ENCODE measurements at regions of chr2 and their contacts with region 1.

Region 1: DNA sequence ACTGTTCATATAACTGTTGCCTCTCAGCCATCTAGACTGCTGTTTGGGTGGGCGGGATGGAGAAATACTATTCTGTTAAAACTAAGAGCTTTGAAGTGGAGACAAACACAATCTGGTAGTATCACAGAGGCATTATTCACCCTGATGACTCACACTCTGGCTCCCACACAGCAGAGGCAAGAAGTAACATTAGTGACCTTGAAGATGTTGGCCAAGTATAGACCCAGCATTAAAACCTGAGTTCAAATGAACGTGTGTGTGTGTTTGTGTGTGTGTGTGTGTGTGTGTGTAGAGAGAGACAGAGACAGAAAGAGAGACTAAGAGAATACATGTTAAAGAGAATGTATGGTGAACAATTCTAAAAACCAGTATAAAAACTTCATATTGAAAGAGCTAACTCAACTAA is 22.5 kb upstream of the ACVR1 start:
- DNase-seq: peak; percentile 46 to 88 (median 63)
- ATAC-seq: peak; percentile 90
- H3K4me3 ChIP-seq: no peak overlapping the region
- H3K27ac ChIP-seq: peak overlapping the region; percentile 40; the same call in 2 of the 3 replicates
- H3K4me1 ChIP-seq: peaks cover 23 to 40% of the 10 kb centered on the region in 2 experiments
- H3K27me3 ChIP-seq: no peaks in the 10 kb centered on the region
- CTCF ChIP-seq: no peak
- EP300 ChIP-seq: peak; percentile 69; the same call in 1 of the 2 replicates
- POLR2A ChIP-seq: no peak
- RAD21 ChIP-seq: peak in 1 of 2 experiments; percentile 11; a peak in 1 of 4 replicates

Region 2: DNA sequence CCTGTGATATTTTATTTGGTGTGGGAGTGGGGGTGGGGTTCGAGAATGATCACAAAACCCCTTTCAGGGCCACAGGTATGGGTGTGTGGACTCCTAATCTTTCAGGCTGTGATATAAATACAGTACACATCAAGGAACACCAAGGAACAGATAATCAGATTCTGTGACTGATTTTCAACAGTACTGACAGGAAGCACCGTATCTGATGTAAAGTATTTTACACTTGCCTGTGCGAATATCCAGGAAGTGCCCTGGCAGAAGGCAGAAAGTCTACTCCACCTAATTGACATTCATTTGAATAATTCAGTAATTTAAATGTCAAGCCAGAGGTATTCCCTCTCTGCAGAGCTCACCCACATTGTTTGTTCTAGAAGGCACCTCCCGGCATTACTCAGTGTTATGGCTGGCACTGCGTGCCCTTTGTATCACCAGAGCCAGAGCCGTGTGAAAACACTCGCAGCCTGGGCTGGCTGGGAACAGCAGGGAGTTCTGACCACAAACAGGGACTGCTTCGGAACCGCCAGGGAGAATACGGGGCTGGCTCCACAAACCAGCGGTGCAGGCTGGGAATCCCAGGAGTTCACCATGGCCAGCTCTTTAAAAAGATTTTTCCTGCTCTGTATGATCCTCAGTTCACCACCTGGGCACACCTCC is 114.3 kb before region 1 on chr2:
- CTCF ChIA-PET with region 1: no interaction called
- POLR2A ChIA-PET with region 1: interaction called, 3 read pairs
- in situ Hi-C with region 1: no loop called
- intact Hi-C with region 1: loop called (anchors 1 kb)
- DNase-seq: peak in 2 of 4 experiments; percentile 24 to 29
- ATAC-seq: no peak
- H3K4me3 ChIP-seq: no peak overlapping the region
- H3K27ac ChIP-seq: peak overlapping the region; percentile 37; the same call in 2 of the 3 replicates
- H3K4me1 ChIP-seq: peaks cover 22 to 66% of the 10 kb centered on the region in 2 experiments
- H3K27me3 ChIP-seq: no peaks in the 10 kb centered on the region
- CTCF ChIP-seq: no peak
- EP300 ChIP-seq: peak; percentile 76
- POLR2A ChIP-seq: no peak
- RAD21 ChIP-seq: 0 out of 4 replicates have a peak, but pooled peaks of 1 of the 2 experiments have one; percentile 3

Region 3: DNA sequence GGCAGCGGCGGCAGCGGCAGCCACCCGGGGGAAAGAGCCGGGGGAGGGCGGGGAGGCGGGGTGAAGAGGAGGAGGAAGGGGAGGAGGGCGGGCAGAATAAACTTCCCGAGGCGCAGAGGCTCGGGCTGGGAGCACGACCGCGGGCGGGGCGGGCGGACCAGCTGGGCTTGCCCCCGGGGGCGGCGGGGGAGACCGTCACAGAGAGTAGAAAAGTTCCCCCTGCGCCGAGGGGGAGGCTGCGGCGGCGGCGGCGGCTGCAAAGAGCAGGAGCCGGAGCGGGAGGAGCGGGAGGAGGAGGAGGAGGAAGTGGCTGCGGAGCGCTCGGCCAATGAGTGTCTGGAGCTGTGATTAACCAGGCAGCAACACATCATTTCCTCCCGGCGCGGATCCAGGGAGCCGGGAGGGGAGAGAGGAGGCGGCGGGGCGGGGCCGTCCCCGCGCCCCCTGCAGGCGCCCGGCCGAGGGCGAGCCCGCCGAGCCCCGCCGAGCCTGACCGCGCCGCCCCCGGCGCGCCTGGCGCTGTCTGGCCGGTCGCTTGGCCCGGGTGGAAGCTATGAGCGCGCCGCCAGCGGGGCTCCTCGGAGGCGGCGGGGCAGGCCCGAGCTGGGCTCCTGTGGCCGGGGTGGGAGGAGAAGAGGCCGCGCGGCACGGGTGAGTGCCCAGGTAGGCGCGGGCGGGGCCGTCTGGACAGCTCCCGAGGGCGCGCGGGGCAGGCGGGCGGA is 22.4 kb before region 1 on chr2 and contains the start of gene ACVR1:
- CTCF ChIA-PET with region 1: no interaction called
- POLR2A ChIA-PET with region 1: interaction called, 11 read pairs
- in situ Hi-C with region 1: no loop called
- intact Hi-C with region 1: loop called (anchors 2 kb)
- DNase-seq: peak; percentile 93 to 98 (median 94)
- ATAC-seq: peak; percentile 90
- H3K4me3 ChIP-seq: peak within 1 kb of the TSS; percentile 67
- H3K27ac ChIP-seq: peak within 1 kb of the TSS; percentile 73
- H3K4me1 ChIP-seq: peaks cover 8 to 19% of the 10 kb centered on the region in 2 experiments
- H3K27me3 ChIP-seq: no peaks in the 10 kb centered on the region
- CTCF ChIP-seq: peak; percentile 27 to 54 (median 42); a peak in 5 of 6 replicates
- EP300 ChIP-seq: peak; percentile 38; the same call in 1 of the 2 replicates
- POLR2A ChIP-seq: peak; percentile 80
- RAD21 ChIP-seq: peak in 1 of 2 experiments; percentile 54; a peak in 2 of 4 replicates
- polyA plus RNA-seq, gene ACVR1: 4.7 to 7.9 TPM

Region 4: DNA sequence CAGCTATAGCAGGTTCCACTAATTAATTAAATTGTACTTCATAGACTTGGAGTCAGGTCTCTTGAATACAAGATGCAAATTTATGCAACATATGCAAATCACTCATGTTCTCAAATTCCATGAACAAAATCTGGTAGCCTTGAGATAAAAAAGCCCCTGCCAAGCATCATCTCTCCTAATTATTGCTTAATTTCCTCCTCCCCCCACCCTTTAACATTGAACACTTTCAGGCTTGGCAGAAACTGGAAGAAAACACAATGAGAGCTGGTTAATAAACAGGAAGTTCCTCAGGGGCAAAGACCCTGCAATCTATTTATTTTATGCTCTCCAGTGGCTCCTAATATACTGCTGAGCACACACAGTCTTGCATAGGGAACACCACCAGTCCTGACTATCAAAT is 13.2 kb after region 1 on chr2:
- CTCF ChIA-PET with region 1: no interaction called
- POLR2A ChIA-PET with region 1: interaction called, 11 read pairs
- in situ Hi-C with region 1: no loop called
- intact Hi-C with region 1: no loop called
- DNase-seq: no peak
- ATAC-seq: no peak
- H3K4me3 ChIP-seq: no peak overlapping the region
- H3K27ac ChIP-seq: no peak overlapping the region
- H3K4me1 ChIP-seq: peaks cover 0 to 15% of the 10 kb centered on the region in 2 experiments; a peak in 3 of 5 replicates
- H3K27me3 ChIP-seq: no peaks in the 10 kb centered on the region
- CTCF ChIP-seq: no peak
- EP300 ChIP-seq: no peak
- POLR2A ChIP-seq: no peak
- RAD21 ChIP-seq: no peak

Region 5: DNA sequence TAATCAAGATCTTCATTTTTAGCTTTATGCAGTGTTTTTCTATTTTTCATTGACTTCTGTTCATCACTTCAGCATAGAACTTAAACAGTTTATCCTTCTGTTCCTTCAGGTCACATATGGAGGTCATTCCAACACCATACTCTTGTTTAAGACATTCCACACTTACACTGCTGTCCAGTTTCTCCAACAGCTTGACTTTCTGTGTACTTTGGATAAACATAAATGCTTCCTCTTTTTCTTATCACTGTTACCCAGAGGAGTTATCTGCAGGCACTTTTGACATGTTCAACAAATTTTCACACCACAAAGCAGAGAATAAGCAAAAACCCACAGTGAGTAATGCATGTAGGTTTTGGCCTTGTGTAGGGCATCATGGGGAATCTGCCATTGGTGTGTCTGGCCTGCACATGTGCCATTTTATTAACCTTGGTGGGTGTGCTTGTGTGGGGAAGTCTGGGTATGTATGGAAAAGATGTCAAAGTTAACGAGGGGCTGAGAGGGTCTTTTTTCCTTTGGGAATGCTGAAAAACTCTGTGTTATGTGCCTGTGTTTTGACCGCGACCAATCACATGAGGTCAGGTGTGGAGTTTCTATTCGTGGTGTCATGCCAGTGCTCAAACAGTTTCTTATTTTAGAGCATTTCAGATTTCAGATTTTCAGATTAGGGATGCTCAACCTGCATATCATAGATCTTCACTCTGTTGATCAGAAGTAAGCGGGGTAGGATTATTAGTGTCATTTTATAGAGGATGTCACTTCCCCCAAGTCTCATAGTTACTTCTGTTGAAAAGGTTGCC is 31.5 kb after region 1 on chr2:
- CTCF ChIA-PET with region 1: no interaction called
- POLR2A ChIA-PET with region 1: no interaction called
- in situ Hi-C with region 1: no loop called
- intact Hi-C with region 1: loop called (anchors 1 kb)
- DNase-seq: peak; percentile 41 to 93 (median 58)
- ATAC-seq: peak; percentile 93
- H3K4me3 ChIP-seq: no peak overlapping the region
- H3K27ac ChIP-seq: peak overlapping the region; percentile 80
- H3K4me1 ChIP-seq: peaks cover 10 to 82% of the 10 kb centered on the region in 2 experiments
- H3K27me3 ChIP-seq: no peaks in the 10 kb centered on the region
- CTCF ChIP-seq: no peak; a peak in 1 of 6 replicates
- EP300 ChIP-seq: peak; percentile 100
- POLR2A ChIP-seq: no peak
- RAD21 ChIP-seq: peak; percentile 44 to 54; a peak in 3 of 4 replicates

Region 6: DNA sequence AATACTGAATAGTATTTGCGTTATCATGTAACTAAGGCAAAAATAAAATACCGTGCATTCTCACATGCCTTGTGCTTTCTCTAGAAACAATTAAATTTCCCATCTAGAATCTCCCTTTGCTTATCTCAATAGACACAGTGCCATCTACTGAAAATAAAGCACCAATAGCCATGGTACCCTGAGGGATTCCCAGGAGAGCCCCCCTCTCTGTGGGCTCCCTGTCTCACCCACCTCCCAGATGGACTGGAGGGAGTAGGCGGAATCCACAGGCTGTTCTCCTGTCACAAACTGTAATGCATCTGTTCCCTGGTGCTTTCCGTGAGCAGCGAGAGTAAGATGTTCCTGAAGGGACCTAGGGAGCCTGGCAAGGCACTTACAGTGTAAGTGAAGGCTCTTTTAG is 90.6 kb after region 1 on chr2:
- CTCF ChIA-PET with region 1: no interaction called
- POLR2A ChIA-PET with region 1: no interaction called
- in situ Hi-C with region 1: no loop called
- intact Hi-C with region 1: loop called (anchors 5 kb)
- DNase-seq: no peak
- ATAC-seq: peak; percentile 71
- H3K4me3 ChIP-seq: no peak overlapping the region
- H3K27ac ChIP-seq: no peak overlapping the region
- H3K4me1 ChIP-seq: no peaks in the 10 kb centered on the region
- H3K27me3 ChIP-seq: no peaks in the 10 kb centered on the region
- CTCF ChIP-seq: peak in 2 of 3 experiments; percentile 28 to 48; a peak in 2 of 6 replicates
- EP300 ChIP-seq: no peak
- POLR2A ChIP-seq: no peak
- RAD21 ChIP-seq: peak; percentile 66 to 74

Measured in K562 (cell line).